ENCODE measurements at regions of chr7 and their contacts with region 1.

Region 1: DNA sequence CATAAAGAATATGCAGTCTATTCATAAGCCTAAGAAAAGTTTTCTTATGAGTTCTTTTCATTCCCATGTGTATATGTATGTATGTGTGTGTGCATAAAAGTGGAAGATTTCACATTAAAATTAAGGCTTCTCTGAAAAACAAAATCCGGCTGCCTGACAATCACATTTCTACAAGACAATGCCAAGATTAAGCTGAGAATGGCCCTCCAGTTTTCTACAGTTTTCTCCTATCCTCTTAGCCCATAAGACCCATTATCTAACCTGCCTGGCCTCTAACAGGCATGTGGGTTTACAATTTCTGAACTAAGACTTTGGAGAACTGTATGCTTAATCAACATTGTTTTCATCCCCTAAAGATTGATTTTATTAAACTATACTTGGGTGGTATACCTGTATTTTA is 446.0 kb upstream of the SEMA3A start:
- DNase-seq: no peak
- H3K4me3 ChIP-seq: no peak overlapping the region
- H3K27ac ChIP-seq: no peak overlapping the region
- H3K4me1 ChIP-seq: no peaks in the 10 kb centered on the region
- H3K27me3 ChIP-seq: no peaks in the 10 kb centered on the region
- CTCF ChIP-seq: no peak
- POLR2A ChIP-seq: no peak

Region 2: GRCh38 chr7:84565345-84566074 is 75.1 kb before region 1 on chr7:
- intact Hi-C with region 1: no loop called
- DNase-seq: no peak
- H3K4me3 ChIP-seq: no peak overlapping the region
- H3K27ac ChIP-seq: no peak overlapping the region
- H3K4me1 ChIP-seq: no peaks in the 10 kb centered on the region
- H3K27me3 ChIP-seq: no peaks in the 10 kb centered on the region
- CTCF ChIP-seq: no peak
- POLR2A ChIP-seq: no peak

Region 3: DNA sequence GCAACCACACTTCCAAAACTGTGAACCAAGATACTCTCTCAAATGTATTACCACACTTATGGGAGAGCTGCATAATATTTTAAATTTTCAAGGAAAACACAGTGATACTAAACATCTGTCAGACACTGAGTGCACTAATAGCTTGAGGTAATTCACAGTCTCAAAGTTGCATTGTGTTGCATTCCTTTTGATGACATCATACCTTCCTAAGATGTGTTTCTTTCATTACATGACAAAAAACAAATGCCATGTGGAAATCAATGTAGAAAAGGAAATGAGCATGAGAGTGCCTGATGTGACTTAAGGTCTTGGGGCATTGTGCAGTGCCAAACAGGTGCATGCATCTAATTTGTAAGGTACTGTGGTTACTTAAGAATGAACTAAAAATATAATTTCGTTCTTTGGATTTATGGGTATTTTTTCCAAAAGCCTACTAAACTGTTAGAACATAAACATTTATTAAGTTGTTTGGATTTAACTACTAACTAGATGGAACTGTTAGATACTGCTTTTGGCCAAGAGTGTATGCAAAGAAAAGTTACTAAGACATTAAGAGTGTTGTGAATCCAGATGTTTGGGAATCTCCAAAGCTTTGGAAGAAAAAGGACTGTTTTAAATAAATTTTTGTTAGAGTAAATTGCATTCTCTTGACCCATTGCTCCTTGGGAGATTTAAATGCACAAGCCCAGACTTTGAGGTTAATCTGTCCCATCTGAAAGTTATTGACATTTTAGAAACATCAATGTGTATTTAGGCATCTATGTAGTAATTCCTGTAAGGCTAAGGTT is 1042.4 kb after region 1 on chr7:
- intact Hi-C with region 1: loop called (anchors 5 kb)
- DNase-seq: no peak
- H3K4me3 ChIP-seq: no peak overlapping the region
- H3K27ac ChIP-seq: no peak overlapping the region
- H3K4me1 ChIP-seq: no peaks in the 10 kb centered on the region
- H3K27me3 ChIP-seq: no peaks in the 10 kb centered on the region
- CTCF ChIP-seq: no peak
- POLR2A ChIP-seq: no peak

Measured in vagina (tissue), 2 donors.